ENCODE measurements at regions of chr6 and their contacts with region 1.

Region 1: DNA sequence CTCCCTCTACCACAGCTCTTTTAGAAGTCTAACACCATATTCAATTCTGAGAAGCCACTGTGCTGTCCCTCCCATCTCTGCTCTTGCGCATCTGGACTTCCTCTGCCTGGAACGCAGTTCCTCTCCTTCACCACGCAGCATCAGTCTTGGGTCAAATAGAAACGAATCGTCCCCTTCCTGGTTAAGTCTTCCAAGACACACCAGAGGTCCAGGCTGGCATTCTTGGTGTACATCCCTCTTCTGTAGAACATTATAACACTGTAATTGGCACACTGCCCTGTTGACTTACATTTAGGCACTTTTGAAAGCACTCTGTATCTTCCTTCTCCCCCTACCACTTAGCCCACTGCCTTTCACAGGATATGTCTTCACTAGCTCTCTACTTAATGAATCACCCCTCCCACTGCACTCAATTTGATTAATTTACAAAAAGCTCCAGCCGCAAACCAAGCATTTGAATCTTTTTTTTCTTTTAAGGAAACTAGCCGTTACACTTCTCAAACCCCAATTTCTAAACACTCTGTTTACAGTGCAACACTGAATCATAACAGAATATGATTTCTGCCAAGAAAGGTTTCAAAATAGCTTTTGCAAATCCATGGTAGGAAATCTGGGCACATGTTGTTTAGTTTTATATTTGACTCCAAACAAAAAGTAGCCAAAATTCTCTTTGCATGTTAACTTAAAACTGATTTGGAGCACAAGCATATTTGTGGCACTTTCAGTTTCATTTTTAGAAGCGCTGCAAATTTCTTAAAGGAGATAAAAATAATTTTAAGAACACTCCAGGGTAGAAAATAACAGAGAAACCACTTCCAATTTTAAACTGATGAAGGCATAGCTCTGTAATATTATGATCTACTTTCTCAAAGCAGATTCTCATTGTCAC is 140.7 kb upstream of the CARMIL1 start:
- DNase-seq: peak; percentile 92
- H3K4me3 Mint-ChIP-seq: peak overlapping the region; percentile 92
- H3K27ac Mint-ChIP-seq: peak overlapping the region; percentile 98
- H3K4me1 Mint-ChIP-seq: peaks cover 33% of the 10 kb centered on the region
- H3K27me3 Mint-ChIP-seq: no peaks in the 10 kb centered on the region

Region 2: GRCh38 chr6:24720604-24721460 is 417.6 kb before region 1 on chr6:
- intact Hi-C with region 1: loop called (anchors 1 kb)
- DNase-seq: peak; percentile 100
- H3K4me3 Mint-ChIP-seq: peak overlapping the region; percentile 99
- H3K27ac Mint-ChIP-seq: peak overlapping the region; percentile 100
- H3K4me1 Mint-ChIP-seq: peaks cover 33% of the 10 kb centered on the region
- H3K27me3 Mint-ChIP-seq: no peaks in the 10 kb centered on the region

Region 3: GRCh38 chr6:25122001-25122400 is 16.5 kb before region 1 on chr6:
- intact Hi-C with region 1: loop called (anchors 1 kb)
- DNase-seq: peak; percentile 47
- H3K4me3 Mint-ChIP-seq: no peak overlapping the region
- H3K27ac Mint-ChIP-seq: no peak overlapping the region
- H3K4me1 Mint-ChIP-seq: peaks cover 65% of the 10 kb centered on the region
- H3K27me3 Mint-ChIP-seq: no peaks in the 10 kb centered on the region

Region 4: GRCh38 chr6:25179051-25179778 is 40.7 kb after region 1 on chr6:
- intact Hi-C with region 1: loop called (anchors 1 kb)
- DNase-seq: peak; percentile 55
- H3K4me3 Mint-ChIP-seq: peak overlapping the region; percentile 49
- H3K27ac Mint-ChIP-seq: peak overlapping the region; percentile 90
- H3K4me1 Mint-ChIP-seq: peaks cover 66% of the 10 kb centered on the region
- H3K27me3 Mint-ChIP-seq: no peaks in the 10 kb centered on the region

Region 5: GRCh38 chr6:25266456-25267100 is 128.1 kb after region 1 on chr6:
- intact Hi-C with region 1: no loop called
- DNase-seq: no peak
- H3K4me3 Mint-ChIP-seq: no peak overlapping the region
- H3K27ac Mint-ChIP-seq: no peak overlapping the region
- H3K4me1 Mint-ChIP-seq: no peaks in the 10 kb centered on the region
- H3K27me3 Mint-ChIP-seq: peaks cover 34% of the 10 kb centered on the region

Region 6: DNA sequence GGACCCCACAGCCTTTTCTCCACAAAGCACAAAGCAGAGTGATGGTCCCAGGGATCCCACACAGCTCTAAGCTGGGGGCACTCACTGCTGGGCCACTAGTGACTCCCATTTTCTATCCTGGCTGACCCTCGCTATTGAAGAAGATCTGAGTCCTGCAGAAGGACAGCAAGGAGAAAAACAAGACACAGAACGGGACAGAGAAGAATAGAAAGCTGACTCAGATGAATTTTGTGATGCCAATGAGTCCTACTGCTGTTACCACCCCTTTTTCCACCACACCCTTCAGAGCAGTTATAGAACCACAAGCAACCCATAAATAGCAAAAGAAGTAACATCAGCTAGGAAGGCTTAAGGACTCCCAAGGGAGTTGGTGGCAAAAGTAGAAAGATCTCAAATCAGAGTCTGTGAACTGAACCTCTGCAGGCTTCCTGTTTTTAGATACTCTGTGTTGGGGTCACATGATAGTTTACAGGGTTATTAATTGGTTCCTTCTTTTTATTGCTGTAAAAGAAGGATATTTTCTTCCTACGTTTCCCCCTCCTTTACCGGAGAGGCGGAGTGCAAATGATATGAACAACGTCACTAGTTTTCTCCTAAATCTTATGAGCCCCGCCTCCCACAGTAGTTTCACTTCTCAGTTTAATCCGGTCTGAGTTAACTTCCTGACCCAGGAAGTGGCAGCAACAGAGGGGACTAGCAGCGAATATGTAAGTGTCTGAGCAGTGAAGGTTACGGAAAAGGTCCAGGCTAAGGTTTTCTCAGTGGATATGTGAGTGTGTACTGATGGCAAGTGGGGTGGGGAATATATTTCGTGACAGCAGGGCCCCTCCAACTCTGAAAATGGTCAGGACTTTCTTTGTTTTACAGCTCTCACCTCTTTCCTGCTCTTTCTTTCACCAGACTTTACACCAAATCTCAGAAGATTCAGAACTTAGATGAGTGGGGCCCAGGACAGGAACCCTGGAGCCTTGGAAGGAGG is 824.0 kb after region 1 on chr6 and contains the start of gene TRIM38:
- intact Hi-C with region 1: loop called (anchors 1 kb)
- DNase-seq: peak; percentile 94
- H3K4me3 Mint-ChIP-seq: peak within 1 kb of the TSS; percentile 88
- H3K27ac Mint-ChIP-seq: peak within 1 kb of the TSS; percentile 96
- H3K4me1 Mint-ChIP-seq: peaks cover 75% of the 10 kb centered on the region
- H3K27me3 Mint-ChIP-seq: no peaks in the 10 kb centered on the region
- total RNA-seq, gene TRIM38: 23.0 and 24.5 TPM in 2 replicates